Colonic mucosa (tissue), 4 donors: ENCODE measurements at regions of chr14 and their contacts with region 1.

Region 1: GRCh38 chr14:64671591-64671990 is 32.6 kb upstream of the PLEKHG3 start:
- DNase-seq: no peak
- H3K4me3 ChIP-seq: no peak overlapping the region
- H3K27ac ChIP-seq: no peak overlapping the region
- H3K4me1 ChIP-seq: peaks cover 7% of the 10 kb centered on the region
- H3K27me3 ChIP-seq: no peaks in the 10 kb centered on the region
- CTCF ChIP-seq: peak; percentile 56

Region 2: GRCh38 chr14:64266239-64266638 is 405.4 kb before region 1 on chr14:
- intact Hi-C with region 1: no loop called
- DNase-seq: no peak
- H3K4me3 ChIP-seq: no peak overlapping the region
- H3K27ac ChIP-seq: no peak overlapping the region
- H3K4me1 ChIP-seq: no peaks in the 10 kb centered on the region
- H3K27me3 ChIP-seq: no peaks in the 10 kb centered on the region
- CTCF ChIP-seq: no peak

Region 3: GRCh38 chr14:64704143-64704742 is 32.7 kb after region 1 on chr14 and contains the start of gene PLEKHG3:
- intact Hi-C with region 1: no loop called
- DNase-seq: peak; percentile 89
- H3K4me3 ChIP-seq: peak within 1 kb of the TSS; percentile 69
- H3K27ac ChIP-seq: peak within 1 kb of the TSS; percentile 84
- H3K4me1 ChIP-seq: peaks cover 15% of the 10 kb centered on the region
- H3K27me3 ChIP-seq: no peaks in the 10 kb centered on the region
- CTCF ChIP-seq: no peak
- total RNA-seq, gene PLEKHG3: 78.8 to 106 TPM

Region 4: GRCh38 chr14:64762044-64763034 is 90.7 kb after region 1 on chr14:
- intact Hi-C with region 1: loop called (anchors 2 kb)
- DNase-seq: peak; percentile 89
- H3K4me3 ChIP-seq: no peak overlapping the region
- H3K27ac ChIP-seq: peak overlapping the region; percentile 37
- H3K4me1 ChIP-seq: peaks cover 22% of the 10 kb centered on the region
- H3K27me3 ChIP-seq: no peaks in the 10 kb centered on the region
- CTCF ChIP-seq: no peak

Region 5: GRCh38 chr14:64891839-64892375 is 220.3 kb after region 1 on chr14:
- intact Hi-C with region 1: loop called (anchors 5 kb)
- DNase-seq: peak; percentile 46
- H3K4me3 ChIP-seq: no peak overlapping the region
- H3K27ac ChIP-seq: no peak overlapping the region
- H3K4me1 ChIP-seq: no peaks in the 10 kb centered on the region
- H3K27me3 ChIP-seq: no peaks in the 10 kb centered on the region
- CTCF ChIP-seq: peak; percentile 47